Gastrocnemius medialis (tissue), 4 donors: ENCODE measurements at regions of chr1 and their contacts with region 1.

Region 1: GRCh38 chr1:156500797-156501499 is 373 bp upstream of the MEF2D start:
- DNase-seq: peak; percentile 94 to 96
- ATAC-seq: peak; percentile 35 to 37
- H3K4me3 ChIP-seq: peak overlapping the region; percentile 89 to 96 (median 93)
- H3K27ac ChIP-seq: peak overlapping the region; percentile 96 to 99 (median 98)
- H3K4me1 ChIP-seq: peaks cover 66 to 67% of the 10 kb centered on the region in 2 donors
- H3K27me3 ChIP-seq: no peaks in the 10 kb centered on the region
- CTCF ChIP-seq: peak in 4 of 5 experiments; percentile 54 to 67 (median 58)
- POLR2A ChIP-seq: no peak

Region 2: GRCh38 chr1:156146020-156146768 is 354.8 kb before region 1 on chr1:
- in situ Hi-C with region 1: no loop called
- intact Hi-C with region 1: no loop called
- DNase-seq: peak in 1 of 2 donors; percentile 55
- ATAC-seq: peak; percentile 61 to 66
- H3K4me3 ChIP-seq: peak overlapping the region in 1 of 4 donors; percentile 6
- H3K27ac ChIP-seq: no peak overlapping the region
- H3K4me1 ChIP-seq: peaks cover 10 to 11% of the 10 kb centered on the region in 2 donors
- H3K27me3 ChIP-seq: peaks cover 8 to 21% (median 17%) of the 10 kb centered on the region in 3 donors
- CTCF ChIP-seq: peak; percentile 58 to 72 (median 67)
- POLR2A ChIP-seq: no peak

Region 3: GRCh38 chr1:156282479-156283222 is 218.3 kb before region 1 on chr1 and contains the start of gene SMG5:
- in situ Hi-C with region 1: no loop called
- intact Hi-C with region 1: loop called (anchors 5 kb)
- DNase-seq: peak; percentile 97
- ATAC-seq: peak; percentile 87 to 90
- H3K4me3 ChIP-seq: peak within 1 kb of the TSS; percentile 72 to 97 (median 82)
- H3K27ac ChIP-seq: peak within 1 kb of the TSS; percentile 90 to 99 (median 94)
- H3K4me1 ChIP-seq: peaks cover 27 to 33% of the 10 kb centered on the region in 2 donors
- H3K27me3 ChIP-seq: no peaks in the 10 kb centered on the region
- CTCF ChIP-seq: no peak
- POLR2A ChIP-seq: peak; percentile 91 to 95
- total RNA-seq, gene SMG5: 47.4 to 83.1 (median 62.7) TPM

Region 4: DNA sequence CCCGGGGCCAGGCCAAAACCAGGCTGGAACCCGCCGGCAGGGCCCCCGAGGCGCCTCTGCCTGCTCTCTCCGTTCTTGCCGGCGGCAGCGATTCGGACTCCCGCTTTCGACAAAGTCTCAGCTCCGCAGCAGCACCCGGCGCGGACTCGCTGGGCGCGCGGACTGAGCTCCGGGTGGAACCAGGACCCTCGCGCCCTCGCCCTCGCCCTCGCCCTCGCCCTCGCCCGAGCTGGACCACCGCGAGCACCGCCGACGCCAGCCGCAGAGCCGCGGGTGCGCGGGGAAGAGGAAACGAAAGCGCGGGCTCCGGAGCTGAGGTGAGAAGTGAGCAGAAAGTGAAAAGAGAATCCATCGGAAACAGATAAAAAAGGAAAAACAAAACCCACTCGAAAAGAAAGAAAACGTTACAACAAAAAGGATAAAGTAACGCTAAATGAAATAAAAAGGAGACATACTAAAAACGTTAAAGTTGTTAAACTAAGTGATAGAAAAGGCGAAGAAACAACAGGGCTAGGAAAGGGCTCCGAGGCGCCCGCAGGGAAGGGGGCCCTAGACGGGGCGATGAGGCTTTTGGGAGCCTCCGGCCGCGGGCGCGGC is 65.3 kb before region 1 on chr1:
- in situ Hi-C with region 1: no loop called
- intact Hi-C with region 1: no loop called
- DNase-seq: no peak
- ATAC-seq: no peak
- H3K4me3 ChIP-seq: peak overlapping the region; percentile 18 to 57 (median 43)
- H3K27ac ChIP-seq: no peak overlapping the region
- H3K4me1 ChIP-seq: peaks cover 10 to 16% of the 10 kb centered on the region in 2 donors
- H3K27me3 ChIP-seq: peaks cover 89 to 99% (median 97%) of the 10 kb centered on the region in 3 donors
- CTCF ChIP-seq: no peak
- POLR2A ChIP-seq: no peak

Region 5: DNA sequence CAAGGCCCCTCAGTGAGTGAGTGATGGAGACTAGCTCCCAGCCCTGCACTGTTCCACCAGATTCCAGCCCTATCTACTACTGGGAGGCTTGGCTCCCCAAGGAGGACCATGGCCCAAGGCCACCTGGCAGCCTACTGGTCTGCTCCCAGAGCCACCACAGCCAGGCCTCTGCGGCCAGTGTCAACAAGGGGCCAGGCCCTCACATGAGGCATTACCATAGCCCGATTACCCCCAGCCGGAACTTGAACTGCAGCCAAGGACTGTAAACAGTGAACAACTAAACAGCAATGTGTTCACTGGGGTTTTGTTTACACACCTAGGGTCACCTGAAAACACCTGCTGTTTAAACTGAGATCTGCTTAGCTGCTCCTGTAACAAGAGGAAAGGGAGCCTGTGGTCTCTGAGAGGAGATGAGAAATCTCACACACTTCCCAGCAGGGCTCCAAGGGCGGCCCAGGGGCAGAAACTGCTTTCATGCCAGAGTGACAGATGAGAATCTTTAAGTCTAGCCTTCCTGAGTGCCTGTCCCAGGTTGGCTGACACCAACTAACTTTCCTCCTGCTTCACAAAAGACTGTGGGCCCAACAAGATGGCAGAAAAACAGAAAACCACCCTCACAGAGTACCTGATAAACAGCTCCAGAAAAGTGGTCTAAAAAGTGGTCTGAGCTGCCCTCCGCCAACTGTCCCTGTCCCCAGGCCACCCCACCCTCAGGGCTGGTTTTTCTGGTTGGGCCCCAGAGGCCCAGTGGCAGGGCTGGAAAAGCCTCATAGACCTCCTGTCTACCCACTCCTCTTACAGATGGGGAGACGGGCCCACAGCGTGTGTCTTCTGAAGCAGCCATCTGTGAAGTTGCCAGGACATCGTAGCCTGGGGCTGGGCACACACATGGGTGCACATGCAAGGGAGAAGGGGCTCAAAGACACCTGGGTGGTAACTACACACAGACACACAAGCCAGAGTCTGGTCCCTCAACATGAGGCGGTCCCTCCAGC is 29.2 kb before region 1 on chr1:
- in situ Hi-C with region 1: loop called in 2 of 4 experiments (anchors 5 kb)
- intact Hi-C with region 1: loop called (anchors 1 kb)
- DNase-seq: peak; percentile 62 to 68
- ATAC-seq: peak; percentile 2 to 37
- H3K4me3 ChIP-seq: no peak overlapping the region
- H3K27ac ChIP-seq: peak overlapping the region; percentile 96 to 99 (median 98)
- H3K4me1 ChIP-seq: peaks cover 56 to 64% of the 10 kb centered on the region in 2 donors
- H3K27me3 ChIP-seq: no peaks in the 10 kb centered on the region
- CTCF ChIP-seq: no peak
- POLR2A ChIP-seq: no peak

Region 6: DNA sequence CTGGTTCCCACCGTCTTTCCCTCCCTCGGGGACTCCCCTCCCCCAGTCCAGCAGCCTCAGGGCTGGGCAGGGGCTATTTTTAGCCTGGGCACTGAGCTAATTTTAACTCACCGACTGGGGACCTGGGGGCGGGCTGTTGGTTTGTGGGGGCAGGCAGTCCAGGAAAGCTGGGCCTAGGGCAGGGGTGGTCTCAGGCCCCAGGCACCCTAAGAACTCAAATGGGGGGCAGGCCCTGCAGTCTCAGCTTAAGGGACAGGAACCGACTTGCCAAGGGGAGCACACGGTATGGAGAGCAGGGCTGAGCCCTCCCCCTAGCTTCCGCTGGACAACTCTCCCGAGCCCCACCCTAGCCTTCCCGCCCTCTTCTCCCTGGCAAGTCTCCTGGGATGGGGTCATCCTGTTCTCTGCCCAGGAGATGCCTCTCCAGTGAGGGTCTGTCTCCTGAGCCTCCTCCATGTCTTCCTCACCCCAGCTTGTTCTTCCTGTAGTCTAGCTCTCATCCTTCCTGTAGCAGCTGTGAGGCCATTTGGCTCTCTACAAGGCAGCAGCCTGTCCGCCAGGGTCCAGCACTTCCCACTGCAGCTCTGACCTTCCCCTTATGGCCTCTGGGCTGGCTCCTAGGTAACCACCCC is 10.4 kb before region 1 on chr1:
- in situ Hi-C with region 1: no loop called
- intact Hi-C with region 1: loop called (anchors 1 kb)
- DNase-seq: peak; percentile 65 to 83
- ATAC-seq: peak; percentile 46 to 55
- H3K4me3 ChIP-seq: peak overlapping the region; percentile 32 to 89 (median 56)
- H3K27ac ChIP-seq: peak overlapping the region; percentile 96 to 99 (median 98)
- H3K4me1 ChIP-seq: peaks cover 96 to 98% of the 10 kb centered on the region in 2 donors
- H3K27me3 ChIP-seq: no peaks in the 10 kb centered on the region
- CTCF ChIP-seq: peak; percentile 51 to 70 (median 53)
- POLR2A ChIP-seq: peak; percentile 45 to 60